PC-9 (cell line): ENCODE measurements at regions of chr19 and their contacts with region 1.

Region 1: GRCh38 chr19:4638828-4639530 is at the start of gene TNFAIP8L1:
- DNase-seq: peak; percentile 60 to 93
- H3K4me3 ChIP-seq: peak within 1 kb of the TSS; percentile 51; the same call in 1 of the 2 replicates
- H3K27ac ChIP-seq: no peak within 1 kb of the TSS
- H3K4me1 ChIP-seq: no peaks in the 10 kb centered on the region
- H3K27me3 ChIP-seq: no peaks in the 10 kb centered on the region
- CTCF ChIP-seq: no peak
- total RNA-seq, gene TNFAIP8L1: 17.8 and 18.6 TPM in 2 replicates

Region 2: GRCh38 chr19:4457654-4458395 is 181.2 kb before region 1 on chr19 and contains the start of gene UBXN6:
- CTCF ChIA-PET with region 1: interaction called, 4 read pairs
- POLR2A ChIA-PET with region 1: no interaction called
- intact Hi-C with region 1: loop called (anchors 5 kb)
- DNase-seq: peak; percentile 94
- H3K4me3 ChIP-seq: peak within 1 kb of the TSS; percentile 64
- H3K27ac ChIP-seq: 0 out of 2 replicates have a peak within 1 kb of the TSS, but pooled peaks have one; percentile 43
- H3K4me1 ChIP-seq: no peaks in the 10 kb centered on the region
- H3K27me3 ChIP-seq: no peaks in the 10 kb centered on the region
- CTCF ChIP-seq: no peak
- total RNA-seq, gene UBXN6: 79.4 and 94.7 TPM in 2 replicates

Region 3: GRCh38 chr19:4524808-4525562 is 114.0 kb before region 1 on chr19:
- CTCF ChIA-PET with region 1: interaction called, 5 read pairs
- POLR2A ChIA-PET with region 1: no interaction called
- intact Hi-C with region 1: loop called (anchors 5 kb)
- DNase-seq: peak in 1 of 2 experiments; percentile 46
- H3K4me3 ChIP-seq: no peak overlapping the region
- H3K27ac ChIP-seq: no peak overlapping the region
- H3K4me1 ChIP-seq: peaks cover 16% of the 10 kb centered on the region
- H3K27me3 ChIP-seq: no peaks in the 10 kb centered on the region
- CTCF ChIP-seq: peak; percentile 67

Region 4: DNA sequence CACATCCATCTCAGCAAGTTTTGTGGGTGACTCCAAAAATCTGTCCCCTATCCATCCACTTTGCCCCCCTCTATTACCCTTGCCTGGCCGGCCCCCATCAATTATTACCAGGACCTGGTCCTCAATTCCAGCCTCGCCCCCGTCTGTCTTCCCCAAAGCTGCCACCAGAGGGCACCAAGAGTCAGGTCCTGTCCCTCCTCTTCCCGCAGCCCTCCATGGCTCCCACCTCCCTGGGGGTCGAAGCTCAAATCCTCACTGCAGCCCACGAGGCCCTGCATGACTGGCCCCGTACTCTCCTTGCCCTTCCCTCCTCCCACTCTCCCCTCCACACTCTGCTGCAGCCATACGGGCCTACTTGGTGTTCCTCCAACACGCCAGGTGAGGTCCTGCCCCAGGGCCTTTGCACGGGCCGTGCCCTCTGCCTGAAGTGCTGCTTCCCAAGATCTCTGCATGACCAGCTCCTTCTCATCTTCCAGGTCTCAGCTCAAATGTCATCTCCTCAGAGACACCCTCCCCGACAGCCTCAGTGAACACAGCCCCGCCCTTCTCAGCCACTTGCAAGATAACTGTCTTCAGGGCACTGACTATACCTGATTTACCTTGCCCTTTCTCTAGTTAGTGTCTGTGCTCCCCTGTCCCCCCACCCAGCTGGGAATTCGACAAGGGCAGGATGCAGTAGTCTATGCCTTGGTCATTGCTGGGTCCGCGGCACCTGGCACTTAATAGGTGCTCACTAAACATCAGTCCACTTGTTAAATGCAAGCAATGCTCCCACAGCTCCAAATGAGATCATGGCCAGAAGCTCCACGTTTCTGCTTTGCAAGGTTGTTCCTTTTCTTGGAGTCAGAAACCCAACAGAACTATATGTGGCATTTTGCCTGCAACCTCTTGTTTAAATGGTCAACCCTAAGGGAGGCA is 62.7 kb before region 1 on chr19:
- CTCF ChIA-PET with region 1: interaction called, 15 read pairs
- POLR2A ChIA-PET with region 1: no interaction called
- intact Hi-C with region 1: loop called (anchors 5 kb)
- DNase-seq: peak in 1 of 2 experiments; percentile 47
- H3K4me3 ChIP-seq: no peak overlapping the region
- H3K27ac ChIP-seq: no peak overlapping the region
- H3K4me1 ChIP-seq: peaks cover 15% of the 10 kb centered on the region
- H3K27me3 ChIP-seq: peaks cover 9% of the 10 kb centered on the region; the same call in 1 of the 2 replicates
- CTCF ChIP-seq: peak; percentile 70

Region 5: GRCh38 chr19:4660181-4660791 is 21.3 kb after region 1 on chr19:
- CTCF ChIA-PET with region 1: no interaction called
- POLR2A ChIA-PET with region 1: no interaction called
- intact Hi-C with region 1: no loop called
- DNase-seq: peak in 1 of 2 experiments; percentile 33
- H3K4me3 ChIP-seq: no peak overlapping the region
- H3K27ac ChIP-seq: no peak overlapping the region
- H3K4me1 ChIP-seq: no peaks in the 10 kb centered on the region
- H3K27me3 ChIP-seq: no peaks in the 10 kb centered on the region
- CTCF ChIP-seq: no peak

Region 6: GRCh38 chr19:4803736-4804695 is 165.0 kb after region 1 on chr19:
- CTCF ChIA-PET with region 1: no interaction called
- POLR2A ChIA-PET with region 1: no interaction called
- intact Hi-C with region 1: loop called (anchors 5 kb)
- DNase-seq: peak in 1 of 2 experiments; percentile 52
- H3K4me3 ChIP-seq: no peak overlapping the region
- H3K27ac ChIP-seq: no peak overlapping the region
- H3K4me1 ChIP-seq: peaks cover 21% of the 10 kb centered on the region
- H3K27me3 ChIP-seq: no peaks in the 10 kb centered on the region
- CTCF ChIP-seq: peak; percentile 78